Endothelial cell of umbilical vein (primary cell): ENCODE measurements at regions of chr4 and their contacts with region 1.

Region 1: GRCh38 chr4:109433205-109434006 is at the start of gene SEC24B:
- DNase-seq: peak; percentile 84
- H3K4me3 ChIP-seq: peak within 1 kb of the TSS; percentile 59 to 96 (median 92)
- H3K27ac ChIP-seq: peak within 1 kb of the TSS; percentile 93
- H3K4me1 ChIP-seq: peaks cover 44% of the 10 kb centered on the region
- H3K27me3 ChIP-seq: no peaks in the 10 kb centered on the region
- CTCF ChIP-seq: peak; percentile 70 to 97
- POLR2A ChIP-seq: peak; percentile 94
- total RNA-seq, gene SEC24B: 34.6 and 35.9 TPM in 2 replicates

Region 2: DNA sequence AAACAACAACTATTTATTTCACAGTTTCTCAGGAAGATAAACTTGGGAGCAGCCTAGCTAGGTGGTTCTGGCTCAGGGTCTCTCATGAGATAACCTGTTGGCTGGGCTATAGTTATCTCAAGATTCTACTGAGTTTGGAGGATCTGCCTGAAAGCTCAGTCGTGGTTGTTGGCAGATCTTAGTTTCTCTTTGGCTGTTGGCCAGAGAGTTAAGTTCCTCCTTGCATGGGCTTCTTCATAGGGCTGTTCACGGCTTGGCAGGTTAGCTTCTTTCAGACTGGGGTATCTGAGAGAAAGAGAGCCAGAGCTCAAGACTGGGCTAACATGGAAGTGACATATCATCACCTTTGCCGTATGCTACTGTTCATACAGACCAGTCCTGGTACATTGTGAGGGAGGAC is 28.9 kb after region 1 on chr4:
- CTCF ChIA-PET with region 1: interaction called, 10 read pairs
- POLR2A ChIA-PET with region 1: no interaction called
- dilution Hi-C with region 1: no loop called
- intact Hi-C with region 1: no loop called
- DNase-seq: no peak
- H3K4me3 ChIP-seq: no peak overlapping the region
- H3K27ac ChIP-seq: no peak overlapping the region
- H3K4me1 ChIP-seq: no peaks in the 10 kb centered on the region
- H3K27me3 ChIP-seq: no peaks in the 10 kb centered on the region
- CTCF ChIP-seq: no peak
- POLR2A ChIP-seq: no peak

Region 3: DNA sequence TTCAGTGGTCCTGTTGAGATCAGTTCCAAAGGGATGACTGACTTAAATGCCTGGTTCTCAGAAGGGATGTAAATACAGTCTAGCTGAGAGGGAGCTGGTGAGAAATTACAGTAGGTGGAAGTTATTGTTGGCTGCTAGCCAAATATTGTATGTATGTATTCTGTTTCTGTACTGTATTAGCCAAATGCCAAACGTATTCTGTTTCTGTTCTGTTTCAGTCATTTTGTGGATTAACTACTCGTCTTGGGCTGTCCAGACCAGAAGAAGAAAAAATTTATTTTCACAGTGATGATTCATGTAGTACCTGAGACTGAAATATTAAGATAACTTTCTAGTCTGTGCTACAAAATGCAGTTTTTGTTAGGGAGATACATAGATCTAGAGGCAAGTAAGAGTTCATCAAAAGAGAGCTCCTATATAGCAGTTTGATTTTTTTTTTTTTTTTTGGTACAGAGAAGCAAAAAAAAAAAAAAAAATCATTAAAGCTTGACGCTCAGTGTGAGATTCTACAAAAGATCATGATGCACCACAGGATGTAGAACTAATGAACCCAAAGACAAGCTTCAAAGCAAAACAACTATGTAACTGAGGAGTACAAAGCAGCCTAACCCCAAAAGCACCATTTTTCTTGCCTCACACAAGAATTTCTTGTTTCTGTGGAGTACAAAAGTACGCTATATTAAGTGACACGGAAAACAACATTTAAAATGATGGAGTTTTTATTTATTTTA is 215.0 kb after region 1 on chr4:
- CTCF ChIA-PET with region 1: interaction called, 4 read pairs
- POLR2A ChIA-PET with region 1: no interaction called
- dilution Hi-C with region 1: no loop called
- intact Hi-C with region 1: loop called (anchors 1 kb)
- DNase-seq: peak; percentile 93
- H3K4me3 ChIP-seq: peak overlapping the region in 1 of 3 experiments; percentile 38
- H3K27ac ChIP-seq: peak overlapping the region; percentile 14
- H3K4me1 ChIP-seq: peaks cover 11% of the 10 kb centered on the region
- H3K27me3 ChIP-seq: no peaks in the 10 kb centered on the region
- CTCF ChIP-seq: no peak
- POLR2A ChIP-seq: no peak

Region 4: DNA sequence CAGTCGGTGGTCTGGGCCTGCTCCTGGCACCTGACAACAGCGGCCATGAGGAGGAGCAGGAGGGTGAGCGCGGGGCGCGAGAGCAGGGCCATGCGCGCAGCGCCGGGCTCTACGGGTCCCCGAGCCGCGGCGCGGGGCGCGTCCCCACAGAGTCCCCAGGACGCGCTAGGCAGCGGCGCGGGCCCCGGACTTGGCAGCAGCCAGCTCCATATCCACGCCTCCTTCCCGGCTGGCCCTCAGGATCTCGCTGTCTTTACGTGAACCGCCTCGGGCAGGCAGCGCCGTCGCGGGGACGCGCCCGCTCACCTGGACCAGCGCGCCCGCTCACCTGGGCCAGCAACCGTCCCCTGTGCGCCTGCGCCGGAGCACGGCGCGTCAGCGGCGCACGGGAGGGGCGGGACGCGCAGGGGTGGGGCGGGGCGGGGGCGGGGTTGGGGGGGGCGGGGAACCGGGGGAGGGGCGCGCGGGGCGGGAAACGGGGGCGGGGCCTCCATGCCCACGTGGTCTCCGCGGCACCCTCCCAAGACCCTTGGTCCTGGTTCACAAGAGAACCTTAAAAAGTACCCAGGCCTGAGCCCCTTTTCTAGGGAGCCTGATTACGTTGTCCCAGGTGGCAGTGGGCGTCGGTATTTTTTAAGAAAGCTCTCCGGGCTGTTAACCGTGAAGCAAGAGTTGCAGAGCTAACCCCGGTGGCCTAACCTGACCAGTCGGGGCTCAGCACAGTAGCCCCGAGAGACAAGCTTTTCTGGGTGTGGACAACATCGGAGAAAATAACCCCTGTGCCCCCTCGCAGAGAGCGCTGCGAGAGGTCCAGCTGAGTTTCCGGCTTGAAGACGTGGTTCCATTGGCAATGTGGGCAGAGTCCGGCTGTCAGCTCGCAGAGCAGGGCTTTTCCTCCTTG is 296.6 kb after region 1 on chr4 and contains the start of gene PLA2G12A:
- CTCF ChIA-PET with region 1: interaction called, 5 read pairs
- POLR2A ChIA-PET with region 1: no interaction called
- dilution Hi-C with region 1: no loop called
- intact Hi-C with region 1: loop called (anchors 1 kb)
- DNase-seq: peak; percentile 75
- H3K4me3 ChIP-seq: peak within 1 kb of the TSS; percentile 86 to 92 (median 86)
- H3K27ac ChIP-seq: peak within 1 kb of the TSS; percentile 48
- H3K4me1 ChIP-seq: peaks cover 9% of the 10 kb centered on the region
- H3K27me3 ChIP-seq: no peaks in the 10 kb centered on the region
- CTCF ChIP-seq: no peak
- POLR2A ChIP-seq: no peak
- total RNA-seq, gene PLA2G12A: 16.6 and 21.6 TPM in 2 replicates

Region 5: DNA sequence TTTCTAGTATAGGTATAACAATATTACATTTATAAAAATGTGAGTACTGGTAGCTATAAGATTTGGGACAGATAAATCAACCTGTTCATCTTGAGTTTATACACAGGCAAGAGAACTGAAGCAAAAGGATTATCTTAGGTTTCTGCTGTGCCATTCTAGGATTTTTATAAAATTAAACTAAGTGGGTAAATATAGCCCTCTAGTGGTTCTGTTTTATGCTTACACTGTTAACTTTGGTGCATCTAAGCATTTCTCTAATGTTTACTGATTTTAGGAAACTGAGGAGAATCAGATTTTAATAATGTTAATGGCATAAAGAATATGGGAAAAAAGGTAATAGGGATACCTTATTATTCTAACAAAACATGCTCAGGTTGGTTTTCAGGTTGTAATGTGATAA is 393.3 kb after region 1 on chr4:
- CTCF ChIA-PET with region 1: interaction called, 14 read pairs
- POLR2A ChIA-PET with region 1: no interaction called
- dilution Hi-C with region 1: no loop called
- intact Hi-C with region 1: no loop called
- DNase-seq: peak; percentile 38
- H3K4me3 ChIP-seq: no peak overlapping the region
- H3K27ac ChIP-seq: no peak overlapping the region
- H3K4me1 ChIP-seq: no peaks in the 10 kb centered on the region
- H3K27me3 ChIP-seq: no peaks in the 10 kb centered on the region
- CTCF ChIP-seq: peak; percentile 14 to 28
- POLR2A ChIP-seq: no peak

Region 6: GRCh38 chr4:110540982-110541440 is 1107.6 kb after region 1 on chr4:
- CTCF ChIA-PET with region 1: no interaction called
- POLR2A ChIA-PET with region 1: interaction called, 3 read pairs
- dilution Hi-C with region 1: no loop called
- intact Hi-C with region 1: loop called (anchors 2 kb)
- DNase-seq: peak; percentile 94
- H3K4me3 ChIP-seq: peak overlapping the region in 1 of 3 experiments; percentile 23
- H3K27ac ChIP-seq: peak overlapping the region; percentile 99
- H3K4me1 ChIP-seq: peaks cover 25% of the 10 kb centered on the region
- H3K27me3 ChIP-seq: no peaks in the 10 kb centered on the region
- CTCF ChIP-seq: no peak
- POLR2A ChIP-seq: no peak